Activated naive CD8-positive, alpha-beta T cell treated with anti-CD3 and anti-CD28 coated beads, Interleukin-2, amount 10 ng/mL, durations not matched to agents 7 days and 5 days (primary cell): ENCODE measurements at regions of chr19 and their contacts with region 1.

Region 1: GRCh38 chr19:6424939-6425731 is 524 bp upstream of the KHSRP start:
- DNase-seq: peak; percentile 96
- ATAC-seq: peak; percentile 85
- H3K4me3 Mint-ChIP-seq: peak overlapping the region; percentile 79
- H3K27ac Mint-ChIP-seq: peak overlapping the region; percentile 98
- H3K4me1 Mint-ChIP-seq: peaks cover 29% of the 10 kb centered on the region
- H3K27me3 Mint-ChIP-seq: no peaks in the 10 kb centered on the region

Region 2: GRCh38 chr19:6318772-6319171 is 106.4 kb before region 1 on chr19:
- POLR2A ChIA-PET with region 1: no interaction called
- DNase-seq: no peak
- ATAC-seq: no peak
- H3K4me3 Mint-ChIP-seq: no peak overlapping the region
- H3K27ac Mint-ChIP-seq: no peak overlapping the region
- H3K4me1 Mint-ChIP-seq: no peaks in the 10 kb centered on the region
- H3K27me3 Mint-ChIP-seq: no peaks in the 10 kb centered on the region

Region 3: GRCh38 chr19:6340493-6341201 is 84.5 kb before region 1 on chr19:
- POLR2A ChIA-PET with region 1: no interaction called
- DNase-seq: no peak
- ATAC-seq: no peak
- H3K4me3 Mint-ChIP-seq: no peak overlapping the region
- H3K27ac Mint-ChIP-seq: no peak overlapping the region
- H3K4me1 Mint-ChIP-seq: peaks cover 6% of the 10 kb centered on the region
- H3K27me3 Mint-ChIP-seq: no peaks in the 10 kb centered on the region

Region 4: GRCh38 chr19:6362027-6362350 is 63.1 kb before region 1 on chr19:
- POLR2A ChIA-PET with region 1: interaction called, 10 read pairs
- DNase-seq: no peak
- ATAC-seq: peak; percentile 0
- H3K4me3 Mint-ChIP-seq: peak overlapping the region; percentile 100
- H3K27ac Mint-ChIP-seq: peak overlapping the region; percentile 99
- H3K4me1 Mint-ChIP-seq: peaks cover 14% of the 10 kb centered on the region
- H3K27me3 Mint-ChIP-seq: no peaks in the 10 kb centered on the region

Region 5: DNA sequence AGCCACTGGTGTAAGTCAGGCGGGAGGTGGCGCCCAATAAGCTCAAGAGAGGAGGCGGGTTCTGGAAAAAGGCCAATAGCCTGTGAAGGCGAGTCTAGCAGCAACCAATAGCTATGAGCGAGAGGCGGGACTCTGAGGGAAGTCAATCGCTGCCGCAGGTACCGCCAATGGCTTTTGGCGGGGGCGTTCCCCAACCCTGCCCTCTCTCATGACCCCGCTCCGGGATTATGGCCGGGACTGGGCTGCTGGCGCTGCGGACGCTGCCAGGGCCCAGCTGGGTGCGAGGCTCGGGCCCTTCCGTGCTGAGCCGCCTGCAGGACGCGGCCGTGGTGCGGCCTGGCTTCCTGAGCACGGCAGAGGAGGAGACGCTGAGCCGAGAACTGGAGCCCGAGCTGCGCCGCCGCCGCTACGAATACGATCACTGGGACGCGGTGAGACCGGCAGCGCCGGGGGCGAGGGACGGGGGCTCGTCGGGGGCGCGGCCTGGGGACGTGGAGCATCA is 52.5 kb before region 1 on chr19 and contains the start of gene ALKBH7:
- POLR2A ChIA-PET with region 1: interaction called, 21 read pairs
- DNase-seq: peak; percentile 91
- ATAC-seq: peak; percentile 83
- H3K4me3 Mint-ChIP-seq: peak within 1 kb of the TSS; percentile 87
- H3K27ac Mint-ChIP-seq: peak within 1 kb of the TSS; percentile 94
- H3K4me1 Mint-ChIP-seq: peaks cover 15% of the 10 kb centered on the region
- H3K27me3 Mint-ChIP-seq: no peaks in the 10 kb centered on the region
- total RNA-seq, gene ALKBH7: 52.0 to 55.7 TPM

Region 6: DNA sequence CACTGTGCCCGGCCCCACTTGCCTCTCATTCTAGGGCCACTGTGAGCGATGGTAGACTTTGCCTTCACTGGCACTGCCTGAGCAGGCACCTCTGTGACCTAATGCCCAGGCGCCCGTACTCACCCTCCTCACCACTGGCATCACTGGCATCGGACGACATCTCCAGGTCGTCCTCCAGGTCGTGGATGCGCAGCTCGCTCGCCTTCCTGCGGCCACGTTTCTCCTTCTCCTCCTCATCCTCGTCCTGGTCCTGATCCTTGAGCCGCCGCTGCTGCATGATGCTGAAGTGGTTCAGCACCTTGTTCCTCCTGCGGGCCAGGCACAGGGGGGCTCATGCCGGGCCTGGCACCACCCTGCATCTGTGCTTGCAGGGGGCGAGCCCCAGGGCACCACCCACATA is 41.9 kb before region 1 on chr19:
- POLR2A ChIA-PET with region 1: no interaction called
- DNase-seq: no peak
- ATAC-seq: no peak
- H3K4me3 Mint-ChIP-seq: no peak overlapping the region
- H3K27ac Mint-ChIP-seq: no peak overlapping the region
- H3K4me1 Mint-ChIP-seq: no peaks in the 10 kb centered on the region
- H3K27me3 Mint-ChIP-seq: no peaks in the 10 kb centered on the region

Region 7: DNA sequence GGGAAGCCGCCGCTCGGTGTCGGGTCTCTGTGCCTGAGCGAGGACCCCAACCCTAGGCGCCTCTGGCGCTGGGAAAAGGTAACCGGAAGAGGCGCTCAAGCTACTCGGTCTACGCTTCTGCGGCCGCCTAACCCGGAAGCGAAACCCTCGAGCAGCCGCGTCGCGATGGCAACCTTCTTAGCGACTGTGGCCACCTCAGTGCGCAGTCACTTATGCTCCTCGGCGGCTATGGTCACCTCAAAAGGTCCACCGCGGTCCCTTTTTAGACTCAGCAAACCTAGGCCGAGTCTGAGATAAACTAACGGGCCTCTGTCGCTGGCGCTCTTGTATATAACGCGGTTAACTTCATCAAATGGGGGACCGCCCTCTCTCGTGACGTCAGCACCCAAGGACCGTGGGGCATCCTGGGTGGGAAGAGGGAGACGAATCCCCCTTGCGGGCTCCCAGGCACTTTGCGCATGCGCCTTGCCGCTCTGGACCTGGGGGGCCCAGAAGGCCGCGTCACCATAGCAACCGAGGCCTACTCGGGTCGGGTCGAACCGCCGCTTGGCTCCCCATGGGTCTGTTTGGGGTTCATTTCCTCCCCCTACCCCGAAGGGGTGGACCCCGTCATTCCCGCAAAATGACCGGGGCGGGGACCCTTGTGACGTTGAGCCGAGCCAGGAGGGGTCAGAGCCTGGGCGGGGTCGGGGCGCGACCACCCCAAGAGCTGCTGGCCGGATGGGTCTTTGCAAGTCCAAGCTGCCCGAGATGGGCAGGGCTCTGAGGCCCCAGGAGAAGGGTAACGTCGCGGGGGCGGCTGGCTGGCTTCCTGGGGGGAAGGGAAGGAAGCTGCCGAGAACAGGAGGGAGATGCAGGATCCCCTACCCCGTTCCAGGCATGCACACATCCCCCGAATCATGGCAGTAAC is 31.8 kb before region 1 on chr19 and contains the start of gene GTF2F1:
- POLR2A ChIA-PET with region 1: interaction called, 28 read pairs
- DNase-seq: peak; percentile 95
- ATAC-seq: peak; percentile 81
- H3K4me3 Mint-ChIP-seq: peak within 1 kb of the TSS; percentile 97
- H3K27ac Mint-ChIP-seq: peak within 1 kb of the TSS; percentile 95
- H3K4me1 Mint-ChIP-seq: peaks cover 21% of the 10 kb centered on the region
- H3K27me3 Mint-ChIP-seq: no peaks in the 10 kb centered on the region
- total RNA-seq, gene GTF2F1: 67.3 to 72.8 TPM

Region 8: DNA sequence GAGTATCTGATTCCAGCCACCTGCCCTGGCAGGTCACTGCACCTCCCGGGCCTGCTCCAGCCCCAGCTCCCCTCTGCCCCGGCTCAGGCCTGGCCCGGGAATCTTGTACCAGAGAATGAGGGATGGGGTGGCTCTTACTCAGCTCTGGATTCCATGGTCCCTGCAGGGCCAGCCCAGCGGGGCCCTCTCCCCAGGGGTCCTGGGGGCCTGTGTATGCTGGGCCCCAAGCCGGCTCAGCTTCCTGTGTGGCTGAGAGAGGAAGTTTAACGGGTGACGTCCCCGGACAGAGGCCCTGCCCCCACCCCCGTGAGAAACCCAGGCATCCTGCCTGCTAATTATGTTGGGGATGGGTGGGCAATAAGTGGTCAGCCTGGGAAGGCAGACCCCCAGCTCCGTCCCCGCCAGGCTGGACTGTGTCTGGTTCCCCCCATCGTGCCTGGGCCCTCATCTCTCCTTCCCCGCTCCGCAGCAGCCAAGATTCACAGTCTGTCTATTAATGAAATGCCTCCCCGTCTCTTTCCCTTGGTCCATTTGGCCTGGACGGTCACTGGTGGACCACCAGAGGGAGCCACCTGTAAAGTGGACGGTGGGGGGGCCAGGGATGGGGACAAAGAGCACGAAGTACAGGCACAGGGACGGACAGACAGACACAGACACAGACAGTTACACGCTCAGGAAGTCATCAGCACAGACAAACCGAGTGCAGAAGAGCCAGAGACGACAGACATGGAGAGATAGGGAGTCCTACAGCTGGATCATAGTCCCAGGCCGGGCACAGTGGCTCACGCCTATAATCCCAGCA is 56.6 kb after region 1 on chr19 and contains the start of gene DENND1C:
- POLR2A ChIA-PET with region 1: interaction called, 26 read pairs
- DNase-seq: peak; percentile 79
- ATAC-seq: peak; percentile 91
- H3K4me3 Mint-ChIP-seq: peak within 1 kb of the TSS; percentile 100
- H3K27ac Mint-ChIP-seq: peak within 1 kb of the TSS; percentile 99
- H3K4me1 Mint-ChIP-seq: peaks cover 24% of the 10 kb centered on the region
- H3K27me3 Mint-ChIP-seq: no peaks in the 10 kb centered on the region
- total RNA-seq, gene DENND1C: 126 to 130 TPM